ENCODE measurements at regions of chr1 and their contacts with region 1.

Region 1: GRCh38 chr1:32247983-32248889 is 1.2 kb downstream of the FAM167B start:
- DNase-seq: peak; percentile 63 to 75 (median 68)
- H3K4me3 ChIP-seq: peak overlapping the region; percentile 42
- H3K4me3 Mint-ChIP-seq: peak overlapping the region; percentile 82 to 100 (median 94)
- H3K27ac ChIP-seq: peak overlapping the region; percentile 89
- H3K27ac Mint-ChIP-seq: peak overlapping the region; percentile 91 to 99 (median 99)
- H3K4me1 ChIP-seq: peaks cover 52% of the 10 kb centered on the region
- H3K4me1 Mint-ChIP-seq: peaks cover 26 to 64% (median 37%) of the 10 kb centered on the region in 4 donors
- H3K27me3 ChIP-seq: no peaks in the 10 kb centered on the region
- H3K27me3 Mint-ChIP-seq: no peaks in the 10 kb centered on the region

Region 2: GRCh38 chr1:32200226-32201010 is 47.8 kb before region 1 on chr1 and contains the start of gene CCDC28B:
- CTCF ChIA-PET with region 1: interaction called, 9 read pairs
- POLR2A ChIA-PET with region 1: interaction called, 20 read pairs
- intact Hi-C with region 1: no loop called
- DNase-seq: peak; percentile 51 to 73 (median 58)
- H3K4me3 ChIP-seq: peak within 1 kb of the TSS; percentile 57 to 85
- H3K4me3 Mint-ChIP-seq: peak within 1 kb of the TSS; percentile 85 to 95 (median 92)
- H3K27ac ChIP-seq: peak within 1 kb of the TSS; percentile 84
- H3K27ac Mint-ChIP-seq: peak within 1 kb of the TSS; percentile 87 to 97 (median 95)
- H3K4me1 ChIP-seq: peaks cover 59% of the 10 kb centered on the region
- H3K4me1 Mint-ChIP-seq: peaks cover 38 to 76% (median 56%) of the 10 kb centered on the region in 4 donors
- H3K27me3 ChIP-seq: no peaks in the 10 kb centered on the region
- H3K27me3 Mint-ChIP-seq: no peaks in the 10 kb centered on the region
- total RNA-seq, gene CCDC28B: 4.2 to 5.1 TPM

Region 3: DNA sequence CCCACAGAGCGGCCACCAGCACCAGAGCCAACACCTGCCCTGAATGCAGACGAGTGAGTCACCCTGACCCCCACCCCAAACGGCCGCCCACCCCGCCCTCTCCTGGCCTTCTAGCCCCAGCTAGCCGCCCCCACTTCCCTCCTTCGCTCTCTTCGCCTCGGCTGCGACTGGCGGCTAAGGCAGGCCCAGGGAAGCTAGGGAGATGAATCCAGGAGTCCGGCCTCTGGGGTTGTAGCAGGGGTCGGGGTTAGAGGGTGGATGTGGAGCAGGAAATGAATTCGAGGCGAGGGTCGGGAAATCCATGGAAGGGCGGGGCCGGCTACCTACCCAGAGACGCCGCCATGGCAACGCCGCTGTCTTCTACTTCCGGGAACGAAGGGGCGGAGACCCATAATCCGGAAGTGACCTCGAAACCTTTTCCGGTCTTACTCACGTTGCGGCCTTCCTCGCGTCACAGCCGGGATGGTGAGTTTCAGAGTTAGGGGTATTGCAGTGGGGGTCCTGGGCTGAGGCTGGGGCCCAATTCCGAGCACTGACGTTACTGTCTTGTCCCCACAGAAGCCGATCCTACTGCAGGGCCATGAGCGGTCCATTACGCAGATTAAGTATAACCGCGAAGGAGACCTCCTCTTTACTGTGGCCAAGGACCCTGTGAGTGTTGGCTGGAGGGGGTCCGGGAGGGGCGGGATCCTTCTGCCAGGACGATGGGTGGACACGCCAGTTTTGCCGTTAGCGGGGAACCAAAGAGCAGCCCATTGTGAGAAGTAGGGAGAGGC is 26.1 kb before region 1 on chr1 and contains the starts of genes EIF3I and TMEM234:
- CTCF ChIA-PET with region 1: interaction called, 65 read pairs
- POLR2A ChIA-PET with region 1: interaction called, 21 read pairs
- intact Hi-C with region 1: loop called (anchors 2 kb)
- DNase-seq: peak; percentile 89 to 96 (median 91)
- H3K4me3 ChIP-seq: peak within 1 kb of the TSS; percentile 96 to 97
- H3K4me3 Mint-ChIP-seq: peak within 1 kb of the TSS; percentile 95 to 99 (median 97)
- H3K27ac ChIP-seq: peak within 1 kb of the TSS; percentile 99
- H3K27ac Mint-ChIP-seq: peak within 1 kb of the TSS; percentile 99 to 100 (median 99)
- H3K4me1 ChIP-seq: peaks cover 30% of the 10 kb centered on the region
- H3K4me1 Mint-ChIP-seq: peaks cover 23 to 59% (median 38%) of the 10 kb centered on the region in 4 donors
- H3K27me3 ChIP-seq: no peaks in the 10 kb centered on the region
- H3K27me3 Mint-ChIP-seq: no peaks in the 10 kb centered on the region
- total RNA-seq, gene EIF3I: 78.3 to 85.3 TPM
- total RNA-seq, gene TMEM234: 27.1 to 30.7 TPM

Region 4: GRCh38 chr1:32266921-32267591 is 18.8 kb after region 1 on chr1:
- CTCF ChIA-PET with region 1: interaction called, 90 read pairs
- POLR2A ChIA-PET with region 1: interaction called, 819 read pairs
- intact Hi-C with region 1: no loop called
- DNase-seq: peak in 3 of 5 donors; percentile 37 to 50 (median 48)
- H3K4me3 ChIP-seq: no peak overlapping the region
- H3K4me3 Mint-ChIP-seq: peak overlapping the region; percentile 74 to 92 (median 85)
- H3K27ac ChIP-seq: peak overlapping the region; percentile 42
- H3K27ac Mint-ChIP-seq: peak overlapping the region; percentile 82 to 99 (median 98)
- H3K4me1 ChIP-seq: peaks cover 82% of the 10 kb centered on the region
- H3K4me1 Mint-ChIP-seq: peaks cover 42 to 71% (median 54%) of the 10 kb centered on the region in 4 donors
- H3K27me3 ChIP-seq: no peaks in the 10 kb centered on the region
- H3K27me3 Mint-ChIP-seq: no peaks in the 10 kb centered on the region

Region 5: DNA sequence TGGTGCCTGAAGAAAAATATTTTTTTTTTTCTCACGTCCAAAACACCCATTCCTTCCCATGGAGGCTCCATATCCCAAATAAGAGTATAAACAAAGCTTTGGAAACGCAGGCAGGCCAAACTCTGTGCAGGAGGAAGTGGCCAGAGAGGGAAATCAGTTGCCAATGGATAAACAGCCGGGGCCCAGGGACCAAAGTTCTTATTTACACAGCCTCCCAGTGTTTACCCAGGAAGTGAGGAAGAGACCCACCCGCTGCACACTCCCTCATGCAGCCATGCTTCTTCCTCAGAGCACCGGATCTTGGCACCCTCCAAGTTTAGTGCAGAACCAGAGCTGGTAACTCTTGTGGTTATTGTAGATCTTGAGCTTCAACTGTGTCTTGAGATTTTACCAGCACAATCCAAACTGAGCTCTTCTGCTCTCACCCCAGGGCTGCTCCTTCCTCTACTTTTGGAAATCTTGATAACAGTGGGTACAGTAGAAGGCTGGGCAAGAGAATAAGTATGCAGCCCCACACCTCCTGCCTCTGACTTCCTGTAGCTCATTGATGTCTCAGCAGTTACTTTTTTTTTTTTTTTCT is 73.6 kb after region 1 on chr1:
- CTCF ChIA-PET with region 1: interaction called, 21 read pairs
- POLR2A ChIA-PET with region 1: interaction called, 96 read pairs
- intact Hi-C with region 1: no loop called
- DNase-seq: peak; percentile 55 to 66 (median 59)
- H3K4me3 ChIP-seq: no peak overlapping the region
- H3K4me3 Mint-ChIP-seq: peak overlapping the region; percentile 72 to 85 (median 78)
- H3K27ac ChIP-seq: peak overlapping the region; percentile 18
- H3K27ac Mint-ChIP-seq: peak overlapping the region; percentile 88 to 96 (median 90)
- H3K4me1 ChIP-seq: peaks cover 63% of the 10 kb centered on the region
- H3K4me1 Mint-ChIP-seq: peaks cover 26 to 55% (median 42%) of the 10 kb centered on the region in 4 donors
- H3K27me3 ChIP-seq: no peaks in the 10 kb centered on the region
- H3K27me3 Mint-ChIP-seq: no peaks in the 10 kb centered on the region

Region 6: DNA sequence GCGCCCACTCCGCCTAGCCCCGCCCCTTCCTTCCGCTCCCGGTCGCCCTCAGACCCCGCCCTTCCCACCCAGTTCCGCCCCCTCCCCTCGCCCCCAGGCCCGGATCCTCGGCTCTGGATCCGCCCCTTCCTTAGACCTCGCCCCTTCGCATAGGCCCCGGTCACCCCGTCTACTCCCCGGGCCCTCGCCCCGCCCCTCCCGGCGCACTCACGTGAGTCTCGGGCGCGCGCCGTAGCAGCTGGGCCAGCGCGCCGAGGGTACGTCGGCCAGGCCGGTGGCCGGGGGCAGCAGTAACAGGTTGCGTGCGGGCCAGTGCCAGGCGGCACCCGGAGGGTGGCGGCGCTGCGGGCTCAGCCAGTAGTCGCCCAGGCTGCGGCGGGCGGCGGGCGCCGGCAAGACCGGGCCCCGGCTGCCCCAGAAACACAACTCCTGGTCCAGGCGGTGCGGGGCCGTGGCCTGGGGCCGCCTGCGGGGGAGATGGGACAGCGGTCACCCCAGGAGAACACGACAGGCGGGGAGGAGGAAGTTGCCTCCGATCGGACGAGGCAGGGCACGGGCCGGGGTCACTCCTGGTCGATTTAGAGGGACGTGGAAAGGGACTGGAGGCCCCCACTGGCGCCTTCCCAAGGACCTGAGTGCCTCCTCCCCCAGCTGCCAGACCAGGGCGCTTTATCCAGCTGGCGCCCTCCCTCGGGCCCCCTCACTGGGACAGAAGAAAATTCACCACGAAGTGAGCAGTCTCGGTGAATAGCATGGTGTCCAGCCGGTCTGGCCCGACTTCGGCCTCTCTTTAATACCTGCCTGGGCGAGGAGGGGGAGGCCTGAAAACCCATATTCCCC is 103.4 kb after region 1 on chr1:
- CTCF ChIA-PET with region 1: interaction called, 5 read pairs
- POLR2A ChIA-PET with region 1: interaction called, 13 read pairs
- intact Hi-C with region 1: no loop called
- DNase-seq: peak; percentile 90 to 94 (median 91)
- H3K4me3 ChIP-seq: peak overlapping the region; percentile 52 to 65
- H3K4me3 Mint-ChIP-seq: peak overlapping the region; percentile 71 to 90 (median 82)
- H3K27ac ChIP-seq: peak overlapping the region; percentile 71
- H3K27ac Mint-ChIP-seq: peak overlapping the region; percentile 86 to 97 (median 92)
- H3K4me1 ChIP-seq: peaks cover 39% of the 10 kb centered on the region
- H3K4me1 Mint-ChIP-seq: peaks cover 22 to 62% (median 39%) of the 10 kb centered on the region in 4 donors
- H3K27me3 ChIP-seq: no peaks in the 10 kb centered on the region
- H3K27me3 Mint-ChIP-seq: no peaks in the 10 kb centered on the region